Endothelial cell of umbilical vein (primary cell): ENCODE measurements at regions of chr6 and their contacts with region 1.

Region 1: GRCh38 chr6:35370124-35370741 is 27.9 kb downstream of the PPARD start:
- DNase-seq: peak; percentile 83
- H3K4me3 ChIP-seq: no peak overlapping the region
- H3K27ac ChIP-seq: peak overlapping the region; percentile 82
- H3K4me1 ChIP-seq: peaks cover 34% of the 10 kb centered on the region
- H3K27me3 ChIP-seq: no peaks in the 10 kb centered on the region
- CTCF ChIP-seq: no peak
- POLR2A ChIP-seq: no peak

Region 2: DNA sequence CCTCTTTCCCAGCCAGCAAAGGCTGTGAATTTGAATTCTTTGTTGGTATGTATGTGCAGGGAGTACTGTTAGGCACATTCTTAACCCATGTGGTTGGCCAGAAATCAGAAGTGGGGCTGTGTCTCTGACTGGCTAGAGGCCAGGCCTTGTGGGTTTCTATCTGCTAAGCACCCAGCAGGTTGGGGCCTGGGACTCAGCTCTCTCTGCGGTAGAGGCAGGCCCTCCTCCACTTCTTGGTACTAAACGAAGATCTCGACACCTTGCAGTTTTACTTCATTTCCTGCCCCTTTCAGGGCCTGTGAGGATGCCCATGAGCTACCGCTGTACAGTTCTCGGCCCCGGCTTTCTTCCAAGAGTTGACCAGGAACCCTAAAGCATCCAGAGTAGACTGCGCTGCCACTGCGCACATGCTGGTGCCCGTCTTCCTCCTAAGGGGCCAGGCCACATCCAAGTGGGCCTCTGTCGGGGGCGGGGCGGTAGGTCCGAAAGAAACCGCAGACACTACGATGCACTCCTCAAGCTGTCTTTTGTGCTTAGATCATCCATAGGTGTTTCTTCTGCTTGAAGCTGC is 280.2 kb before region 1 on chr6:
- CTCF ChIA-PET with region 1: no interaction called
- POLR2A ChIA-PET with region 1: no interaction called
- dilution Hi-C with region 1: no loop called
- intact Hi-C with region 1: no loop called
- DNase-seq: no peak
- H3K4me3 ChIP-seq: no peak overlapping the region
- H3K27ac ChIP-seq: no peak overlapping the region
- H3K4me1 ChIP-seq: no peaks in the 10 kb centered on the region
- H3K27me3 ChIP-seq: no peaks in the 10 kb centered on the region
- CTCF ChIP-seq: no peak
- POLR2A ChIP-seq: no peak

Region 3: GRCh38 chr6:35391240-35391968 is 21.2 kb after region 1 on chr6:
- CTCF ChIA-PET with region 1: interaction called, 3 read pairs
- POLR2A ChIA-PET with region 1: no interaction called
- dilution Hi-C with region 1: no loop called
- intact Hi-C with region 1: loop called (anchors 1 kb)
- DNase-seq: peak; percentile 88
- H3K4me3 ChIP-seq: no peak overlapping the region
- H3K27ac ChIP-seq: peak overlapping the region; percentile 93
- H3K4me1 ChIP-seq: peaks cover 38% of the 10 kb centered on the region
- H3K27me3 ChIP-seq: no peaks in the 10 kb centered on the region
- CTCF ChIP-seq: no peak
- POLR2A ChIP-seq: peak; percentile 42

Region 4: GRCh38 chr6:36938536-36938935 is 1568.3 kb after region 1 on chr6:
- CTCF ChIA-PET with region 1: no interaction called
- POLR2A ChIA-PET with region 1: no interaction called
- dilution Hi-C with region 1: no loop called
- intact Hi-C with region 1: no loop called
- DNase-seq: no peak
- H3K4me3 ChIP-seq: no peak overlapping the region
- H3K27ac ChIP-seq: no peak overlapping the region
- H3K4me1 ChIP-seq: peaks cover under 1% of the 10 kb centered on the region
- H3K27me3 ChIP-seq: peaks cover 0 to 3% of the 10 kb centered on the region in 2 experiments
- CTCF ChIP-seq: no peak
- POLR2A ChIP-seq: no peak